Ascending aorta (tissue), 2 donors: ENCODE measurements at regions of chr20 and their contacts with region 1.

Region 1: DNA sequence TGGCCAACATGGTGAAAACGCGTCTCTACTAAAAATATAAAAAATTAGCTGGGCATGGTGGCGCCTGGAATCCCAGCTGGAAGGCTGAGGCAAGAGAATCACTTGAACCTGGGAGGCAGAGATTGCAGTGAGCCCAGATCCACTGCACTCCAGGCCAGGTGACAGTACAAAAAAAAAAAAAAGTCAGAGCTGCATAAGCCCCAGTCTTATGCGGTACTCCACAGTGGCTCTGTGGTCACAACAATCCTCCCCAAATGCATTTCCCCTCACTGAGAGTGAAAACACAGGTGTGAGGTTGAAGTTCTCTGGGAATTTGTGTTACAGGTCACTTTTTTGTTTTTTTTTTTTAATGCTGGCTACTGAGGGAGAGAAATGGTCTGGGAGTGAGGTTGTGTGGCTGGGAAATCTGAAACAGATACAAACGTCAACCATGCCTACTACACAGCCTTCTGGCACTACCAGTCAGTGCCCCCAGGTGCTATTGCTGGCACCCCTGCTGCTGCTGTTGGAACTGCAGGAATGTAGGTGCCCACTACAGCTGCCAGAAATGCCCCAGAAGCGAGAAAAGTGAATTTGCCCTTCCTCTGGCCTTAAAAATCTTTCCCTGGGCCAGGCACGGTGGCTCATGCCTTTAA is 5.7 kb downstream of the MRPS26 start:
- DNase-seq: no peak
- H3K4me3 ChIP-seq: no peak overlapping the region
- H3K27ac ChIP-seq: no peak overlapping the region
- H3K4me1 ChIP-seq: peaks cover 6 to 8% of the 10 kb centered on the region in 2 donors
- H3K27me3 ChIP-seq: no peaks in the 10 kb centered on the region
- CTCF ChIP-seq: no peak

Region 2: GRCh38 chr20:3115190-3116107 is 63.9 kb after region 1 on chr20:
- intact Hi-C with region 1: loop called (anchors 2 kb)
- DNase-seq: no peak
- H3K4me3 ChIP-seq: no peak overlapping the region
- H3K27ac ChIP-seq: no peak overlapping the region
- H3K4me1 ChIP-seq: peaks cover 0 to 5% of the 10 kb centered on the region in 2 donors
- H3K27me3 ChIP-seq: no peaks in the 10 kb centered on the region
- CTCF ChIP-seq: peak in 2 of 3 experiments; percentile 65 to 73

Region 3: GRCh38 chr20:3521852-3522740 is 470.6 kb after region 1 on chr20:
- intact Hi-C with region 1: no loop called
- DNase-seq: no peak
- H3K4me3 ChIP-seq: no peak overlapping the region
- H3K27ac ChIP-seq: no peak overlapping the region
- H3K4me1 ChIP-seq: no peaks in the 10 kb centered on the region
- H3K27me3 ChIP-seq: no peaks in the 10 kb centered on the region
- CTCF ChIP-seq: no peak